Left ventricle myocardium superior (tissue), 1 donor: ENCODE measurements at regions of chr14 and their contacts with region 1.

Region 1: GRCh38 chr14:21014761-21015190 is 10.1 kb downstream of the NDRG2 start:
- DNase-seq: peak; percentile 77
- ATAC-seq: peak; percentile 82

Region 2: DNA sequence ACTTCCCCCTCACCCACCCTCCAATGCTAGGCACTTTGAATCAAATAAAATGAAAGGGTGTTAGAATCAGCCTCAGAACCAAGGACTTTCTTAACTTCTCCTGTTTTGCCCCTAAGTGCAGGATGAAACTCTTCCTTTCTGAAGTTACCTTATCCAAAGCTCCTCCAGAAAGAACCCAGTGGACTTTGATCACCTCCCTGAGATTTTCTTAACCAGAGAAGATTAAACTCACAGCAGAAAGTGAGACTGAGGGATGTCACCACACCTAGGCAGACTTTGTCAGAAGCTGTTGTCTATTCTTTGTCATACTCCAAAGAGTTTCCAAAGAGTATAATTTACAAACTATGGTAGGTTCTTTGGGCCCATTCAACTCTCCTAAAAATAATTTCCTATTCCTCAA is 137.8 kb before region 1 on chr14:
- intact Hi-C with region 1: no loop called
- DNase-seq: no peak
- ATAC-seq: no peak

Region 3: DNA sequence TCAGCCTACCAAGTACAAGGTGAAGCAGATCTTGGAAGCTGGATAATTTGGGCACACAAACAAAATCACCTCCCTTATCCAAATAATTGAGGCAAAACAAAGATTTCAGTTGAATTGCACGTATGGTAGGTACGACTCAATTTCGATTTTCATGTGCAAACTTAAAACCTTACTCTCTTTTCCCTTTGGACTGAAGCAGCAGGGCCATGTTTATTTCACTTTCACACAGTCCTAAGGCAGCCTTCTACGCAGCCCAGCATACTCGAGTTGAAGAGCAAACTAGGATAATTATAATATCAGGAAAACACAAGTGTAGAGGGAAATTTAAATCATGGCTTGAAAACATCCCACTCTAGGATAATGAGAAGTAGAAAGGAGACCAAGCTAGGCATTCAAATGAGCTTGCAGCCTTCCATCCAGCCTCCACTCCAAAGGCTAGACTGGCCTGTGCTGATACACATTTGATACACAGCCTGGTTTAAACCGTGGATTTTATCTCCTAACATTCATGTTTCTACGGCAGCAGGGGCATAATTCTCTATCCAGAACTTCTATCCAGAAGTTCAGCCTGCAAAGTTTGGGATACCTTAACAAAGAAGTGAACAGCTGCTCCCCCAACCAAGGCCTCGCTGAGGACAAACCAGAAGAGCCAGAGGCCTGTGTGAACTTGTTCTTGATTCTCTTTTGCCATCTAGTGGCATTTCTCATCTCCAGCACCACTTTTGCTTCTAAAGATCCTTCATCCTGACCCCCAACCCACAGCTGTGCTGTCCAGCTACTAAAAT is 25.0 kb after region 1 on chr14:
- intact Hi-C with region 1: loop called (anchors 2 kb)
- DNase-seq: peak; percentile 48
- ATAC-seq: peak; percentile 73

Region 4: GRCh38 chr14:21071225-21072030 is 56.7 kb after region 1 on chr14:
- intact Hi-C with region 1: loop called (anchors 10 kb)
- DNase-seq: peak; percentile 91
- ATAC-seq: peak; percentile 72

Region 5: GRCh38 chr14:21191809-21192446 is 177.2 kb after region 1 on chr14:
- intact Hi-C with region 1: no loop called
- DNase-seq: peak; percentile 88
- ATAC-seq: peak; percentile 97